ENCODE measurements at regions of chr20 and their contacts with region 1.

Region 1: GRCh38 chr20:35092524-35093266 is at the start of gene TRPC4AP:
- DNase-seq: peak; percentile 91
- H3K4me3 ChIP-seq: peak within 1 kb of the TSS; percentile 80 to 89 (median 81)
- H3K27ac ChIP-seq: peak within 1 kb of the TSS; percentile 93 to 95 (median 93)
- H3K4me1 ChIP-seq: peaks cover 17 to 45% (median 28%) of the 10 kb centered on the region in 4 donors
- H3K27me3 ChIP-seq: no peaks in the 10 kb centered on the region
- CTCF ChIP-seq: peak; percentile 96 to 99 (median 98)
- EP300 ChIP-seq: no peak
- POLR2A ChIP-seq: peak; percentile 77
- total RNA-seq, gene TRPC4AP: 57.3 to 85.3 (median 70.1) TPM

Region 2: GRCh38 chr20:35215066-35215956 is 122.6 kb after region 1 on chr20:
- in situ Hi-C with region 1: loop called in 1 of 4 experiments (anchors 10 kb)
- intact Hi-C with region 1: no loop called
- DNase-seq: no peak
- H3K4me3 ChIP-seq: no peak overlapping the region
- H3K27ac ChIP-seq: no peak overlapping the region
- H3K4me1 ChIP-seq: no peaks in the 10 kb centered on the region
- H3K27me3 ChIP-seq: no peaks in the 10 kb centered on the region
- CTCF ChIP-seq: no peak
- EP300 ChIP-seq: no peak
- POLR2A ChIP-seq: no peak

Measured in transverse colon (tissue), 4 donors.